Naive thymus-derived CD4-positive, alpha-beta T cell (primary cell): ENCODE measurements at regions of chr7 and their contacts with region 1.

Region 1: GRCh38 chr7:37510043-37510634 is 61.5 kb upstream of the ELMO1 start:
- DNase-seq: peak in 6 of 9 donors; percentile 10 to 41 (median 34)
- ATAC-seq: peak; percentile 69
- H3K4me3 ChIP-seq: no peak overlapping the region
- H3K4me3 Mint-ChIP-seq: no peak overlapping the region
- H3K27ac ChIP-seq: no peak overlapping the region
- H3K27ac Mint-ChIP-seq: no peak overlapping the region
- H3K4me1 ChIP-seq: no peaks in the 10 kb centered on the region
- H3K4me1 Mint-ChIP-seq: no peaks in the 10 kb centered on the region
- H3K27me3 ChIP-seq: no peaks in the 10 kb centered on the region
- H3K27me3 Mint-ChIP-seq: peaks cover 0 to 49% (median 16%) of the 10 kb centered on the region in 5 donors

Region 2: GRCh38 chr7:37208528-37208927 is 301.6 kb before region 1 on chr7:
- CTCF ChIA-PET with region 1: interaction called, 3 read pairs
- POLR2A ChIA-PET with region 1: no interaction called
- intact Hi-C with region 1: loop called (anchors 1 kb)
- DNase-seq: peak in 7 of 9 donors; percentile 17 to 56 (median 33)
- ATAC-seq: peak; percentile 77
- H3K4me3 ChIP-seq: no peak overlapping the region
- H3K4me3 Mint-ChIP-seq: no peak overlapping the region
- H3K27ac ChIP-seq: no peak overlapping the region
- H3K27ac Mint-ChIP-seq: peak overlapping the region; percentile 25 to 89 (median 71)
- H3K4me1 ChIP-seq: no peaks in the 10 kb centered on the region
- H3K4me1 Mint-ChIP-seq: peaks cover 0 to 17% (median 8%) of the 10 kb centered on the region in 7 donors
- H3K27me3 ChIP-seq: no peaks in the 10 kb centered on the region
- H3K27me3 Mint-ChIP-seq: no peaks in the 10 kb centered on the region

Region 3: DNA sequence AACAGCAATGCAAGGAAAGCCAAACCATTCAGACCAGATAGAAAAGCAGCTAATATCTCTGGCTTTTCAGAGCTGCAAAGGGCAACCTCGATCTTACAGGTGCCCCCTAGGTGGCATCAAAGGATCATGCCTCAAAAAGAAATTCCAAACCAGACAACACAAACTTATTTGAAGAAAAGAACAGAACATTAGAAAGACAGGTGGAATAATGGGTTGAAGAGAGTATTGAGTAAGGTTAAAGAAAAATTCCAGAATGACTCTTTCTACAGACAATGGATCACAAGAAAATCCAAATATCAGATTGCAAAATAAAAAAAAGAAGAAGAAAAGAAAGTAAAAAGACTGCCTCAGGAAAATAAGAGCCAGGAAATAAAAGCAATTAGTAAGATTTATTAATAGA is 275.2 kb before region 1 on chr7:
- CTCF ChIA-PET with region 1: interaction called, 10 read pairs
- POLR2A ChIA-PET with region 1: no interaction called
- intact Hi-C with region 1: loop called in 1 of 2 experiments (anchors 1 kb)
- DNase-seq: peak in 6 of 9 donors; percentile 13 to 45 (median 33)
- ATAC-seq: peak; percentile 32
- H3K4me3 ChIP-seq: no peak overlapping the region
- H3K4me3 Mint-ChIP-seq: no peak overlapping the region
- H3K27ac ChIP-seq: no peak overlapping the region
- H3K27ac Mint-ChIP-seq: peak overlapping the region in 2 of 9 donors; percentile 1 to 10
- H3K4me1 ChIP-seq: no peaks in the 10 kb centered on the region
- H3K4me1 Mint-ChIP-seq: peaks cover 12 to 33% (median 24%) of the 10 kb centered on the region in 7 donors
- H3K27me3 ChIP-seq: no peaks in the 10 kb centered on the region
- H3K27me3 Mint-ChIP-seq: no peaks in the 10 kb centered on the region